CD4-positive, alpha-beta memory T cell (primary cell): ENCODE measurements at regions of chr5 and their contacts with region 1.

Region 1: DNA sequence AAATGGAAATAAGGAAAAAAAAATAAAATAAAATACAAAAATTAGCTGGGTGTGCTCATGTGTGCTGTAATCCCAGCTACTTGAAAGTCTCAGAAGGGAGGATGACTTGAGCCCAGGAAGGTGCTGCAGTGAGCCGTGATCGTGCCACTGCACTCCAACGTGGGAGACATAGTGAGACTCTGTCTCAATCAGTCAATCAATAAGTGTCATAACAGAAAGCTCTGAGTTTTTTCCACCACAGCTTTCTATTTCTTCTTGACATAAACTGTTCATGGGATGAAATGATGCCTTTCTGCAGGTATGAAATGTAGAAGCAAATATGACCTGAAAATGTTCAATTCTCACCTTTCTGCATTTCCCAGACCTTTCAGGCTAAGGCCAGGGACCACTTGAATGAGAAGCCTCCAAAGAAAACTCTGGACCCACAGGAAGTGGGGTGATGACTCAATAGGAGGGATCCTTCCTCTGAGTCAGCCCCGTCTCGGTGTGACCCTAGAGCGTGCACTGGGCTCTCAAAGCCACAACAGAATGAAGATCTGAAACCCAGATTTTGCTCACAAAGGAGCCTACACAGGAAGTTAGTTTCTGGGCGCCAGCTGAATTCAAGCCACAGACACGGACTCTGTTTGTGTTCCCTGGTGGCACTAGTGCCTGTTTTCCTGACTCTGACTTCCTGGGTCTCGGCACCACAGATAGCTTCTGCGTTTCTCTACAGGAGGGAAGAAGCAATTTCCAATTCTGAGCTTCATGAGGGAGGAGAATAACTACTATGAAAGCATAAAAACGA is 62.0 kb downstream of the ANKH start:
- DNase-seq: peak; percentile 58 to 89 (median 70)
- H3K4me3 ChIP-seq: peak overlapping the region in 1 of 2 donors; percentile 19
- H3K4me3 Mint-ChIP-seq: peak overlapping the region; percentile 79 to 91 (median 84)
- H3K27ac ChIP-seq: peak overlapping the region; percentile 52
- H3K27ac Mint-ChIP-seq: peak overlapping the region; percentile 63 to 97 (median 93)
- H3K4me1 ChIP-seq: peaks cover 50% of the 10 kb centered on the region
- H3K4me1 Mint-ChIP-seq: peaks cover 50 to 78% (median 57%) of the 10 kb centered on the region in 4 donors
- H3K27me3 ChIP-seq: no peaks in the 10 kb centered on the region
- H3K27me3 Mint-ChIP-seq: no peaks in the 10 kb centered on the region

Region 2: DNA sequence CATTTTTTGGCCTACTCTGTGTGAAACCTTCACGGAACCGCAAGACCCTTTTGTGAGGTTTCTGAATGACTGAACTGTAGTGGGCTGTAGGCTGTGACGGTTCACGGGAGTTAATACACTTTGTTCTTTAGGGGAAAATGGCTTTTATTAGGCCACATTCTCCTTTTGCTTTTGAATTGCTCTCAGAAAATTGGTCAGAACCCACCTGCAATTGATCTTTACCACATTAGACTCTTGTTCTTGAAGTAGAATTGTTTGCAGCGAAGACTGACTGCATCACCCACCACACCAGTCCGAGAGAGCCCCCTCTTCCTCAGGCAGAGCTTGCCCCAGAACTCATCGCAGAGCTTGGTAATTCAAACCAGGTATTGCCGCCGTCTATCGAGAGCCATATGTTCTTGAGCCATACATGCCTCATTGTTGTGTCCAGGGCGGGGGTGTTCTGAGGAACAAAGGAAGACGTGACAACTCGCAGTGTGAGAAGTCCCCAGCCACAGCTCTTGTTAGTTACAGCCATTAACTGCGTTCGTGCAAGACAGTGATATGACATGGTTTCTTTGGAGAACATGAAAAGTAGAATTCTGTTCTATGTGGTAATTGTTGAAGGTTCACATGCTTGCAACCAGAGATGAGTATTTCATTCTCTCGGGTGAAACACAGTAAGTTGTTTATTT is 394.4 kb before region 1 on chr5:
- CTCF ChIA-PET with region 1: no interaction called
- POLR2A ChIA-PET with region 1: no interaction called
- intact Hi-C with region 1: loop called (anchors 2 kb)
- DNase-seq: peak in 4 of 5 donors; percentile 13 to 19 (median 16)
- H3K4me3 ChIP-seq: peak overlapping the region in 1 of 2 donors; percentile 29
- H3K4me3 Mint-ChIP-seq: peak overlapping the region; percentile 48 to 79 (median 63)
- H3K27ac ChIP-seq: peak overlapping the region; percentile 58
- H3K27ac Mint-ChIP-seq: peak overlapping the region; percentile 83 to 98 (median 95)
- H3K4me1 ChIP-seq: peaks cover 47% of the 10 kb centered on the region
- H3K4me1 Mint-ChIP-seq: peaks cover 32 to 66% (median 46%) of the 10 kb centered on the region in 4 donors
- H3K27me3 ChIP-seq: no peaks in the 10 kb centered on the region
- H3K27me3 Mint-ChIP-seq: peaks cover 0 to 2% of the 10 kb centered on the region in 2 donors

Region 3: GRCh38 chr5:14794583-14795230 is 14.9 kb before region 1 on chr5:
- CTCF ChIA-PET with region 1: interaction called, 5 read pairs
- POLR2A ChIA-PET with region 1: interaction called, 11 read pairs
- intact Hi-C with region 1: no loop called
- DNase-seq: no peak
- H3K4me3 ChIP-seq: no peak overlapping the region
- H3K4me3 Mint-ChIP-seq: peak overlapping the region in 3 of 8 donors; percentile 7 to 43 (median 17)
- H3K27ac ChIP-seq: no peak overlapping the region
- H3K27ac Mint-ChIP-seq: peak overlapping the region in 2 of 7 donors; percentile 5 to 36
- H3K4me1 ChIP-seq: peaks cover 27% of the 10 kb centered on the region
- H3K4me1 Mint-ChIP-seq: peaks cover 45 to 76% (median 56%) of the 10 kb centered on the region in 4 donors
- H3K27me3 ChIP-seq: no peaks in the 10 kb centered on the region
- H3K27me3 Mint-ChIP-seq: no peaks in the 10 kb centered on the region